ENCODE measurements at regions of chr6 and their contacts with region 1.

Region 1: GRCh38 chr6:99568103-99568933 is at the start of gene CCNC:
- DNase-seq: peak; percentile 74 to 91 (median 87)
- ATAC-seq: peak; percentile 99
- H3K4me3 ChIP-seq: peak within 1 kb of the TSS; percentile 87
- H3K4me3 Mint-ChIP-seq: peak within 1 kb of the TSS; percentile 92 to 100 (median 98)
- H3K27ac ChIP-seq: peak within 1 kb of the TSS; percentile 84
- H3K27ac Mint-ChIP-seq: peak within 1 kb of the TSS; percentile 89 to 99 (median 94)
- H3K4me1 ChIP-seq: peaks cover 7 to 9% of the 10 kb centered on the region in 2 donors
- H3K4me1 Mint-ChIP-seq: peaks cover 20 to 55% (median 38%) of the 10 kb centered on the region in 7 donors
- H3K27me3 ChIP-seq: no peaks in the 10 kb centered on the region
- H3K27me3 Mint-ChIP-seq: peaks cover 0 to under 1% (median 0%) of the 10 kb centered on the region in 5 donors
- total RNA-seq, gene CCNC: 31.4 to 45.4 (median 37.3) TPM

Region 2: DNA sequence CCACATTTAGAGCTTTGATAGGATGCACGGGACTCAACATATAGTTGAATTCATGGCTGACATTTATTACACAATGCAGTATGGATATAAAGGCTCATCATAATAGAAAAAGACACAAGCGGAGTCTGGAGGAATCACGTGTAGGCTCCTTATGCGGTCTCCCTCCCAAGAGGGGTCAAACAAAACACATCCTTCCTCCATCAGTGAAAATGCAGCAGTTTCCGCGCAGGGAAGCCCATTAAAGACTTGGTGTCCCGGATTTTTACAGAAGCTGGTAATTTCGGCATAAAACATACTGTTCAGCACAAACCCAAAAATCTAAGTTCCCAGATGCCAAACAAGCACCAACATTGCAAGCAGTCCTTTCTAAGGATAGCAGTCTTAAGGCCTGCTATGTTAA is 54.2 kb before region 1 on chr6:
- CTCF ChIA-PET with region 1: no interaction called
- POLR2A ChIA-PET with region 1: interaction called, 6 read pairs
- intact Hi-C with region 1: loop called (anchors 1 kb)
- DNase-seq: no peak
- ATAC-seq: no peak
- H3K4me3 ChIP-seq: peak overlapping the region; percentile 75
- H3K4me3 Mint-ChIP-seq: peak overlapping the region; percentile 26 to 99 (median 93)
- H3K27ac ChIP-seq: no peak overlapping the region
- H3K27ac Mint-ChIP-seq: peak overlapping the region in 5 of 9 donors; percentile 33 to 86 (median 65)
- H3K4me1 ChIP-seq: peaks cover 0 to 16% of the 10 kb centered on the region in 2 donors
- H3K4me1 Mint-ChIP-seq: peaks cover 4 to 32% (median 28%) of the 10 kb centered on the region in 7 donors
- H3K27me3 ChIP-seq: no peaks in the 10 kb centered on the region
- H3K27me3 Mint-ChIP-seq: peaks cover 0 to 12% (median 0%) of the 10 kb centered on the region in 5 donors

Region 3: DNA sequence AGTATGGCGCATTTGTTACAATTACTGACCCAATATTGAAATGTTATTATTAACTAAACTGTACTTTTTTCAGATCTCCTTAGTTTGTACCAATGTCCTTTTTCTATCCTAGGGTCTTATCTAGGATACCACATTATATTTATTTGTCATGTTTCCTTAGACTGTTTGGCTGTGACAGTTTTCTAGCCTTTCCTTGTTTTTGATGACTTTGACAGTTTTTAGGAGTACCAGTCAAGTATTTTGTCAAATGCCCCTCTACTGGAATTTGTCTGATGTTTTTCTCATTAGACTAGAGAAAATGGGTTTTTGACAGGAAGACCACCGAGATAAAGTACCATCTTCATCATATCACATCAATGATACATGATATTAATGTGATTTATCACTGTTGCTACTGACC is 14.4 kb before region 1 on chr6:
- CTCF ChIA-PET with region 1: no interaction called
- POLR2A ChIA-PET with region 1: interaction called, 3 read pairs
- intact Hi-C with region 1: loop called in 1 of 2 experiments (anchors 2 kb)
- DNase-seq: no peak
- ATAC-seq: no peak
- H3K4me3 ChIP-seq: no peak overlapping the region
- H3K4me3 Mint-ChIP-seq: no peak overlapping the region
- H3K27ac ChIP-seq: no peak overlapping the region
- H3K27ac Mint-ChIP-seq: peak overlapping the region in 1 of 9 donors; percentile 33
- H3K4me1 ChIP-seq: no peaks in the 10 kb centered on the region
- H3K4me1 Mint-ChIP-seq: peaks cover 0 to 7% (median 0%) of the 10 kb centered on the region in 7 donors
- H3K27me3 ChIP-seq: no peaks in the 10 kb centered on the region
- H3K27me3 Mint-ChIP-seq: no peaks in the 10 kb centered on the region

Region 4: DNA sequence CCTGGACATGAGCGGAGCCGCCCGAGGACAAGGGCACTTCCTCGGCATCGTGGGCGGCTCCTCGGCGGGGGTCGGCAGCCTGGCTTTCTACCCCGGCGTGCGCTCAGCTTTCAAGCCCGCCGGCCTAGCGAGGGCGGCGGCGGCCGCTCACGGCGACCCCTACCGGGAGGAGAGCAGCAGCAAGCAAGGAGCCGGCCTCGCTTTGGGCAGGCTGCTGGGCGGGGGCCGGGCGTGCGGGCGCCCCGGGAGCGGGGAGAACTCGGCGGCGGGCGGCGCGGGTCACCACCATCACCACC is 45.0 kb after region 1 on chr6:
- CTCF ChIA-PET with region 1: interaction called, 3 read pairs
- POLR2A ChIA-PET with region 1: no interaction called
- intact Hi-C with region 1: loop called in 1 of 2 experiments (anchors 2 kb)
- DNase-seq: peak in 1 of 9 donors; percentile 43
- ATAC-seq: peak; percentile 65
- H3K4me3 ChIP-seq: no peak overlapping the region
- H3K4me3 Mint-ChIP-seq: peak overlapping the region in 7 of 10 donors; percentile 41 to 79 (median 72)
- H3K27ac ChIP-seq: no peak overlapping the region
- H3K27ac Mint-ChIP-seq: no peak overlapping the region
- H3K4me1 ChIP-seq: peaks cover 16% of the 10 kb centered on the region in 2 donors
- H3K4me1 Mint-ChIP-seq: peaks cover 11 to 34% (median 18%) of the 10 kb centered on the region in 7 donors
- H3K27me3 ChIP-seq: peaks cover 26 to 54% of the 10 kb centered on the region in 2 donors
- H3K27me3 Mint-ChIP-seq: peaks cover 66 to 88% (median 80%) of the 10 kb centered on the region in 5 donors

Measured in naive thymus-derived CD4-positive, alpha-beta T cell (primary cell).